ENCODE measurements at regions of chr12 and their contacts with region 1.

Region 1: GRCh38 chr12:52278541-52279421 is 4.3 kb downstream of the KRT86 start:
- DNase-seq: peak; percentile 38
- H3K4me3 ChIP-seq: peak overlapping the region; percentile 17
- H3K27ac ChIP-seq: peak overlapping the region; percentile 21
- H3K27me3 ChIP-seq: no peaks in the 10 kb centered on the region
- CTCF ChIP-seq: peak; percentile 97

Region 2: DNA sequence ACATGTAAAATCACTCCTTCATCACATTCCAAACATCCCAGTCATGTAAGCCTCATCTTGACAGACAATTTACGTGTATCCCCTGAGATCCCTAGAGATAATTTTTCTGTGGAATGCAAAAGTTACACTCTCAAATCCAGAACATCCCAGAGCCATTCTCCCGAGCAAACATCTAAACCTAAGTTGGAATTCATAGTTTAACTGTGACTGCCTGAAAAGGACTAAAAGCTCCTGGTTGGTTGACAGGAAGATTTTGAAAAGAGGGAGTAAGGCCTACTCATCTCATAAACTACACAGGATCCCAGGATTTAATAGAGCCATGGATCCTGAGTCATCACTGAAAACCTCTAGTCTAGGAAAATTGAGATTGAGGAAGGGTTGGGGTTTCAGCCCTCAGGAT is 564.1 kb before region 1 on chr12:
- CTCF ChIA-PET with region 1: no interaction called
- POLR2A ChIA-PET with region 1: no interaction called
- DNase-seq: no peak
- H3K4me3 ChIP-seq: no peak overlapping the region
- H3K27ac ChIP-seq: peak overlapping the region; percentile 23
- H3K27me3 ChIP-seq: no peaks in the 10 kb centered on the region
- CTCF ChIP-seq: no peak

Region 3: GRCh38 chr12:52171950-52172512 is 106.8 kb before region 1 on chr12:
- CTCF ChIA-PET with region 1: interaction called, 12 read pairs
- POLR2A ChIA-PET with region 1: no interaction called
- DNase-seq: no peak
- H3K4me3 ChIP-seq: no peak overlapping the region
- H3K27ac ChIP-seq: no peak overlapping the region
- H3K27me3 ChIP-seq: no peaks in the 10 kb centered on the region
- CTCF ChIP-seq: peak; percentile 37

Region 4: GRCh38 chr12:52235822-52236692 is 42.7 kb before region 1 on chr12:
- CTCF ChIA-PET with region 1: interaction called, 19 read pairs
- POLR2A ChIA-PET with region 1: no interaction called
- DNase-seq: no peak
- H3K4me3 ChIP-seq: no peak overlapping the region
- H3K27ac ChIP-seq: no peak overlapping the region
- H3K27me3 ChIP-seq: no peaks in the 10 kb centered on the region
- CTCF ChIP-seq: no peak

Region 5: DNA sequence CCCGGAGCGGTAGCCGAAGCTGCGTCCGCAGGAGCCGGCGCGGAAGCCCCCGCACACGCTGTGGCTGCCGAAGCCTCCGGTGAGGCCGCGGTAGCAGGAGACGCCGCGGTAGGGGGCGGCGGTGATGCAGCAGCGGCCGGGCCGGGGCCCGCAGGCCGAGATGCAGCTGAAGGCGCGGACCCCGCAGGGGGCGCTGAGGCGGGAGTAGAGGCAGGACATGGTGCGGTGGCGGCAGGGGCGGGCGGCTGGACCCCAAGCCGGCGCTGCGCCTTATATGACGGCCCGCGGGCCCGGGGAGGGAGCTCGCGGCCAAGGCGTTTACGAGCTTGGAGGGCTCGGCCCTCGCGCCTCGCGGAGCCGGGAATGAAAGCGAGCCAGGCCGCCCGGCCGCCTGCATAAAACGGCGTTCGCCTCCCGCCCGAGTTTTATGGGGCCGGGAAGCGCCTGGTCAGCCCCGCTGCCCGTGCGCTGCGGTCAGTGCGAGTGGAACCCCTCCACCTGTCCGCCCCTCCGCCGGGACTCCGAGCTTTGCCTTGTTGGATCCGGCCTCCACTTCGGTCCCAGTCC is 20.4 kb before region 1 on chr12:
- CTCF ChIA-PET with region 1: interaction called, 121 read pairs
- POLR2A ChIA-PET with region 1: no interaction called
- DNase-seq: no peak
- H3K4me3 ChIP-seq: peak overlapping the region; percentile 17; the same call in 1 of the 2 replicates
- H3K27ac ChIP-seq: no peak overlapping the region
- H3K27me3 ChIP-seq: peaks cover 52% of the 10 kb centered on the region
- CTCF ChIP-seq: no peak

Region 6: DNA sequence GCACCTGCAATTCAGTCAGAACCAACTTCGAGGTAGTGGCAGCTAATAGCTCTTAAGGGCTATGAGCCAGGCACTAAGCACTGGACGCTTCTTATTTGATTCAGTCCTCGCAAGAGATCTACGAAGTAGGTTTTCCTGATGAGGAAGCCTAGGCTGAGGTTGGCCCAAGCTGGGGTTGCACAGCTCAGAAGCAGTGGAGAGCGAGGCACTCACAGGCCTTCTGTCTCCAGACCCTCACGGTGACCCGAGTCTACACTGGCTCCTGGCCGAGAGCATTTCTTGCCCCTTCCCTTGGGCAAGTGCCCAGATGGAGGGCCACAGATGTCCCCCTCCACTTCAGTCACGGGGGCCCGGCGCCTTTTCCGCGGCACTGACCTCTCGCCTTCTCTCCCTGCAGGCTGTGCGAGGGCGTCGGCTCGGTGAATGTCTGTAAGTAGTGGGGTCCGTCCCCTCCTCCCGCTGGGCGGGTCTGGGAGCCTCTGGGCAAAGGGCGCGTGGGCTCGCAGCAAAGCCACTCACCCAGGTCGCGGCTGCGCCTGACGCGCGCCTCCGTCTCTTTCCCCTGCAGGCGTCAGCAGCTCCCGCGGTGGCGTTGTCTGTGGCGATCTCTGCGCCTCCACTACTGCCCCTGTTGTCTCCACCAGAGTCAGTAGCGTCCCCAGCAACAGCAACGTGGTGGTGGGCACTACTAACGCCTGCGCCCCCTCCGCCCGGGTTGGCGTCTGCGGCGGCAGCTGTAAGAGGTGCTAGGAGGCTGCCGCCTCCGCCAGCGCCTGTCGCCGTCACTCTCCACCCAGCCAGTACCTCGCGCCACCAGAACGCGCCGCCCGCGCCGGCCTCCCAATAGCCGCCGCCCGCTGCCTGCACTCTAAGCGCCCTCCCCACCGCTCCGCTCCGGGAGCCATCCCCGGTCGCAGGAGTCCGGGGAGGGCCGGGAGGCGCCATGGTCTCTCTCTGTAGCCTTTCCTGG is 29.3 kb after region 1 on chr12:
- CTCF ChIA-PET with region 1: interaction called, 32 read pairs
- POLR2A ChIA-PET with region 1: interaction called, 3 read pairs
- DNase-seq: no peak
- H3K4me3 ChIP-seq: peak overlapping the region; percentile 54
- H3K27ac ChIP-seq: no peak overlapping the region
- H3K27me3 ChIP-seq: peaks cover 53% of the 10 kb centered on the region
- CTCF ChIP-seq: no peak